Colonic mucosa (tissue), 4 donors: ENCODE measurements at regions of chr2 and their contacts with region 1.

Region 1: GRCh38 chr2:164737612-164738081 is 104.0 kb downstream of the COBLL1 start:
- DNase-seq: peak; percentile 64
- H3K4me3 ChIP-seq: no peak overlapping the region
- H3K27ac ChIP-seq: no peak overlapping the region
- H3K4me1 ChIP-seq: peaks cover 5% of the 10 kb centered on the region
- H3K27me3 ChIP-seq: no peaks in the 10 kb centered on the region
- CTCF ChIP-seq: peak; percentile 57

Region 2: DNA sequence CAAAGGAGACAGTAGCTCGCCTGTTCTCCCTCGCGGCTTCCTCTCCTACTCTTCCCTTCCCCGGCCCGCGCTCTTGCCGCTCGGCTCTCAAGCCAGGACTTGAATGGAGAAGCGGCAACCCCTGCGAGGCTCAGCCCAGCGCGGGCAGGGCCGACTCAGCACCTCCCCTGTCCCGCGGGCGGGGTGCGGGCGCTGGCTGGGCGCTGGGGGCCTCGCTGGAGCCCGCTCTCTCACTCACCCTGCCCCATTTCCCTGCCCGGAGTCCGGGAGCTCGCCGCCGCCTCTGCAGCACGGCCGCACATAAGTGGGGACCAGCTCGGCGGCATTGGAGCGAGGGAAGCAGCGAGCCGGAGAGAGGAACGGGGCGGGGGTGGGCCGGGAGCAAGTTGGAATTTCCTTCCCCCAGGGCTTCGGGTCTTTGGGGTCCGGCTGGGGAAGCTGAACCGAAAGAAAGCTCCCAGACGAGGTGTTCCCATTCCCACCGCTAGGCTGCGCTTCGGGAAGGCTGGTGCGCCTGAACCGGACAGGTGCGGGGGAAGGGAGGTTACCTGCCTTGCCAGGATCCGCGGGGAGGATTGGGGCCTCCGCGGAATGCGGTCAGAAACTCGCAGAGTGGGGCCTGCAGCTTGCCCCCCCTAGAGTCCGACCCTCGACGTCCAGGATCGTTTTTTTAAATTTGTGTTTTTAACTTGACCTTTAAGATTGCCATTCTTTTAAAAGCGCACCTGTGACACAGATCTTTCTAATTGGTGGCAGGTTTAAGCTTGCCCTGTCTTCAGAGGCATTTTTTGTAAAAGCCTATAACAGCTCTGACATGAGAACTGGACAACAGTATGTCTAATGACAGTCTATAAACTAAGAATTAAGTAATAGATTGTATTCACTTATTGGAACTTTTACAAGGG is 104.3 kb after region 1 on chr2 and contains the start of gene COBLL1:
- intact Hi-C with region 1: loop called (anchors 5 kb)
- DNase-seq: peak; percentile 91
- H3K4me3 ChIP-seq: peak within 1 kb of the TSS; percentile 57
- H3K27ac ChIP-seq: peak within 1 kb of the TSS; percentile 96
- H3K4me1 ChIP-seq: no peaks in the 10 kb centered on the region
- H3K27me3 ChIP-seq: no peaks in the 10 kb centered on the region
- CTCF ChIP-seq: peak; percentile 81
- total RNA-seq, gene COBLL1: 20.7 to 23.9 TPM

Region 3: DNA sequence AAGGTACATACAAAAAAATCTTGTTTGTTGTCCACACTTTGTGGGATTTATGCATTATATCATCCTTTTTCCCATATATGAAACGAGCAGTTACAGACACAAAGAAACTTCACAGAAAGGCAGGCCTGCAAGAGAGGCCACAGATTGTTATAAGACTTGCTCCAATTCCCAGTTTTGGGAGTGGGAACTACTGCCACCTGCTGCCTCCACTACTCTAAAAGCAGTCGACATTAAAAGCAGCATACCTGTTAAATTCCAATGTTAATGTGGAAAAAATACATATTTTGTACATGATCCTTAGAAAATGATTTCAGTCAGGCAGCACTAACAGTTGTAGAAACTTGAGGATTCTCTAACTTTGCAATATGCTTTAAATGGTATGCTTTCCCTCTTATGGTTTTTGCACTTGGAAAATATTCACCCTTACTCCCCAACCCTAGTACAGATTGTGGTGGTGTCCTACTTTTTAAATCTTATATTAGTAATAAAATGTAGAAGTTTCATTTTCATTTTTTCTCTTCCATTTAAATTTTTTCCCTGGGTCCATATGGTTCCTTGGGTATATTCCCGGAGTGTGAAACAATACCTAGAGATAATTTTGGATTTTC is 179.8 kb after region 1 on chr2:
- intact Hi-C with region 1: loop called (anchors 2 kb)
- DNase-seq: peak; percentile 40
- H3K4me3 ChIP-seq: no peak overlapping the region
- H3K27ac ChIP-seq: no peak overlapping the region
- H3K4me1 ChIP-seq: no peaks in the 10 kb centered on the region
- H3K27me3 ChIP-seq: no peaks in the 10 kb centered on the region
- CTCF ChIP-seq: peak; percentile 22